OCI-LY7 (cell line): ENCODE measurements at regions of chr14 and their contacts with region 1.

Region 1: GRCh38 chr14:59330455-59330854 is 134.7 kb downstream of the GPR135 start:
- DNase-seq: peak; percentile 64
- H3K4me3 ChIP-seq: no peak overlapping the region
- H3K27ac ChIP-seq: peak overlapping the region; percentile 32
- H3K4me1 ChIP-seq: peaks cover 18% of the 10 kb centered on the region
- CTCF ChIP-seq: peak; percentile 49; the same call in 1 of the 2 replicates

Region 2: DNA sequence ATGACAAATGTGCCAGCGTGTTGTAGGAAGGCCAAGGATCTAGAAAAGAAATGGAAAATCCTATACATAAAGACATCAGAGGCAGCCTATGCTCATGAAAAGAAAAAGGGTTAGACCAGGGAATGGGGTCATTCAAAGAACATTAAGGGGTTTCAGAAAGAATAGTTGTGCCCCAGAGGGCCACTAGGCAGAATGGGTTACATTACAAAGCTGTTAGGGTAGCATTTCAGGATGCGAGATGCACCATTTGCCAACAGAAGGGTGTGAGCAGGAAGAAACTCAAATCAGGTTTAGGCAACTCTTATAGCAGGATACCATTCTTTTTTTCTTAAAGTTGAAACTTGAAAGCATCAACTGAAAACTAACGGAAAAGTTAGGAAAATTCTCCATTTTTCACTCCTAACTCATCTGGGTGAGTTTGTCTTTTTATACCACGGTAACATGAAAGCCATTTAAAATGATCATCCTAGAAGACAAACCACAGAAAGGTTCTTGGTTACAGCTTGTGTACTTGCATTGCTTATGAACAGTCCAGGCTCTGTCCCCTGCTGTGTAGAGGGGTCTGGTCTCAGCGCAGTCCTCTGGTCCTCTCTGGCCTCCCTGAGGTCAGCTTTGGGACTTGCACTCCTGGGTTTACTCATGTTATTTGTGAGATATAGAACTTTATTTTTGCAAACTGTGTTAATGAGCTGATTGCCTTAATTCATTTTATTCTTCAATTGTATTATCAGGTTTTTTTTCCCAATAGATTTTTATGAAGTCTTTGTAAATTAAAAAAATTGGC is 483.6 kb before region 1 on chr14:
- CTCF ChIA-PET with region 1: no interaction called
- POLR2A ChIA-PET with region 1: no interaction called
- intact Hi-C with region 1: no loop called
- DNase-seq: no peak
- H3K4me3 ChIP-seq: no peak overlapping the region
- H3K27ac ChIP-seq: no peak overlapping the region
- H3K4me1 ChIP-seq: no peaks in the 10 kb centered on the region
- CTCF ChIP-seq: no peak

Region 3: GRCh38 chr14:59342516-59343489 is 12.3 kb after region 1 on chr14:
- CTCF ChIA-PET with region 1: interaction called, 3 read pairs
- POLR2A ChIA-PET with region 1: interaction called, 12 read pairs
- intact Hi-C with region 1: no loop called
- DNase-seq: no peak
- H3K4me3 ChIP-seq: no peak overlapping the region
- H3K27ac ChIP-seq: no peak overlapping the region
- H3K4me1 ChIP-seq: peaks cover 34% of the 10 kb centered on the region
- CTCF ChIP-seq: no peak

Region 4: GRCh38 chr14:59370158-59370742 is 39.8 kb after region 1 on chr14:
- CTCF ChIA-PET with region 1: no interaction called
- POLR2A ChIA-PET with region 1: interaction called, 11 read pairs
- intact Hi-C with region 1: no loop called
- DNase-seq: no peak
- H3K4me3 ChIP-seq: no peak overlapping the region
- H3K27ac ChIP-seq: no peak overlapping the region
- H3K4me1 ChIP-seq: no peaks in the 10 kb centered on the region
- CTCF ChIP-seq: no peak